IMR-90 (cell line): ENCODE measurements at regions of chr14 and their contacts with region 1.

Region 1: DNA sequence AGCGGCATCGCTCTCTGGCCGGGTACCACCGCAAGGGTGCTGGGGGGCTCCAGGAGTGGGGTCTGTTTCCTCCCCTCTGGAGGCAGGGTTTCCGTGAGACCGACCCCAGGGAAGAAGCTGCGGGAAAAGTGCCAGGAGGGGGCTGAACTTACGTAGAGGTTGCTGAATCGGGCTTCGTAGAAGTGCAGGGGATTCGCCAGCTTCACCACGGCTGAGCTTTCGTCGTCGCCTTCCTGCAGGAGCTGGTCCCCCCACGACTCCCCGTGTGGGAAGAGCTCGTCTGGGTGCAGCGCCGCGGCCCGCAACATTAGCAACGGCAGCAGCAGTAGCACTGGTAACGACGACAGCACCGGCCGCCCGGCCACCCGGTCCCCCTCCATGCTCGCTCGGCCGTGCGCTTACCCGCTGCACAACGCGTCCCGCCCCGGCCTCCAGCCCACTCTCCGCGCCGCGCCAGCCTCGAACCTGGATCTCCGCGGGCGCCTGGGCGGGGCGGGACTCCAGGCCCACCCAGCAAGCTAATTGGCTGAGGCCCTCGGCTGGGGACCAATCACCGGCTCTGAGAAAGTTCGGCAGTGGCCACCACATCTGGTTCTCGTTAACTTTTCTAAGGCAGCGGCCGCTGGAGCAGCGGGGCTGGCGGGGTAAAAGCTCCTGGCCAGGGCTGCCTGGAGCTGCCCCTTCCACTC is at the start of gene NID2:
- DNase-seq: peak; percentile 95
- ATAC-seq: peak; percentile 85
- H3K4me3 ChIP-seq: peak within 1 kb of the TSS; percentile 94
- H3K27ac ChIP-seq: peak within 1 kb of the TSS; percentile 97
- H3K4me1 ChIP-seq: peaks cover 22% of the 10 kb centered on the region
- H3K27me3 ChIP-seq: no peaks in the 10 kb centered on the region
- CTCF ChIP-seq: no peak
- POLR2A ChIP-seq: no peak; the same call in 1 of the 2 replicates
- RAD21 ChIP-seq: no peak
- total RNA-seq, gene NID2: 101 and 102 TPM in 2 replicates

Region 2: DNA sequence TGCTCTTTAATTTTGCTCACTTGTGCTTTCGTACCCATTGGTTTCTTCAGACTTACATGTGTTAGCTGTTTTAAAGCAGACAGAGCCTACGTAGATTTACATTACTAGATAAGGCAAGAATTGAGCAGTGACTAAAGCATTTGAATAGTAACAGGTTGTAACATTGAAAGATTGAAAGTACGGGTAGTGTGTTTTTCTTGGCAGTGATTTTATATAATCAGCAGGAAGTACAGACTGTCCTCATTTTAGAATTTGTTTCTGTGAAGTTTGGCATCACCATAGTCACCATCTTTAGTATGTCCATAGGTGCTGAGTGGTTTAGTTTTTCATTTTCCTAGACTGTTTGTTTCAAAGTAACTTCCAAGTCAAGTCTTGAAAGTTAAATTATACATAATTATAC is 65.4 kb before region 1 on chr14:
- CTCF ChIA-PET with region 1: no interaction called
- POLR2A ChIA-PET with region 1: interaction called, 3 read pairs
- dilution Hi-C with region 1: no loop called
- in situ Hi-C with region 1: no loop called
- intact Hi-C with region 1: loop called (anchors 5 kb)
- DNase-seq: peak; percentile 75
- ATAC-seq: no peak; the same call in 1 of the 2 replicates
- H3K4me3 ChIP-seq: no peak overlapping the region
- H3K27ac ChIP-seq: no peak overlapping the region
- H3K4me1 ChIP-seq: no peaks in the 10 kb centered on the region
- H3K27me3 ChIP-seq: no peaks in the 10 kb centered on the region
- CTCF ChIP-seq: no peak
- POLR2A ChIP-seq: no peak
- RAD21 ChIP-seq: no peak

Region 3: GRCh38 chr14:52080817-52081755 is 12.3 kb after region 1 on chr14:
- CTCF ChIA-PET with region 1: interaction called, 19 read pairs
- POLR2A ChIA-PET with region 1: interaction called, 14 read pairs
- dilution Hi-C with region 1: no loop called
- in situ Hi-C with region 1: no loop called
- intact Hi-C with region 1: no loop called
- DNase-seq: peak; percentile 96
- ATAC-seq: peak; percentile 80
- H3K4me3 ChIP-seq: no peak overlapping the region
- H3K27ac ChIP-seq: peak overlapping the region; percentile 34
- H3K4me1 ChIP-seq: peaks cover 32% of the 10 kb centered on the region
- H3K27me3 ChIP-seq: no peaks in the 10 kb centered on the region
- CTCF ChIP-seq: no peak
- POLR2A ChIP-seq: peak; percentile 79
- RAD21 ChIP-seq: peak; percentile 14; the same call in 1 of the 2 replicates

Region 4: GRCh38 chr14:52111563-52111962 is 42.8 kb after region 1 on chr14:
- CTCF ChIA-PET with region 1: interaction called, 6 read pairs
- POLR2A ChIA-PET with region 1: no interaction called
- dilution Hi-C with region 1: no loop called
- in situ Hi-C with region 1: no loop called
- intact Hi-C with region 1: loop called (anchors 2 kb)
- DNase-seq: peak; percentile 87
- ATAC-seq: no peak
- H3K4me3 ChIP-seq: no peak overlapping the region
- H3K27ac ChIP-seq: peak overlapping the region; percentile 99
- H3K4me1 ChIP-seq: peaks cover 35% of the 10 kb centered on the region
- H3K27me3 ChIP-seq: no peaks in the 10 kb centered on the region
- CTCF ChIP-seq: no peak
- POLR2A ChIP-seq: no peak
- RAD21 ChIP-seq: no peak

Region 5: GRCh38 chr14:52124791-52125661 is 56.3 kb after region 1 on chr14:
- CTCF ChIA-PET with region 1: interaction called, 4 read pairs
- POLR2A ChIA-PET with region 1: interaction called, 5 read pairs
- dilution Hi-C with region 1: no loop called
- in situ Hi-C with region 1: no loop called
- intact Hi-C with region 1: loop called (anchors 1 kb)
- DNase-seq: peak; percentile 87
- ATAC-seq: peak; percentile 79
- H3K4me3 ChIP-seq: no peak overlapping the region
- H3K27ac ChIP-seq: peak overlapping the region; percentile 78
- H3K4me1 ChIP-seq: peaks cover 15% of the 10 kb centered on the region
- H3K27me3 ChIP-seq: no peaks in the 10 kb centered on the region
- CTCF ChIP-seq: no peak
- POLR2A ChIP-seq: no peak
- RAD21 ChIP-seq: no peak

Region 6: GRCh38 chr14:52840916-52841315 is 772.2 kb after region 1 on chr14:
- CTCF ChIA-PET with region 1: no interaction called
- POLR2A ChIA-PET with region 1: no interaction called
- dilution Hi-C with region 1: no loop called
- in situ Hi-C with region 1: no loop called
- intact Hi-C with region 1: no loop called
- DNase-seq: peak; percentile 71
- ATAC-seq: peak; percentile 92
- H3K4me3 ChIP-seq: no peak overlapping the region
- H3K27ac ChIP-seq: no peak overlapping the region
- H3K4me1 ChIP-seq: peaks cover 2% of the 10 kb centered on the region; the same call in 1 of the 2 replicates
- H3K27me3 ChIP-seq: no peaks in the 10 kb centered on the region
- CTCF ChIP-seq: no peak
- POLR2A ChIP-seq: no peak
- RAD21 ChIP-seq: no peak